ENCODE measurements at regions of chr19 and their contacts with region 1.

Region 1: DNA sequence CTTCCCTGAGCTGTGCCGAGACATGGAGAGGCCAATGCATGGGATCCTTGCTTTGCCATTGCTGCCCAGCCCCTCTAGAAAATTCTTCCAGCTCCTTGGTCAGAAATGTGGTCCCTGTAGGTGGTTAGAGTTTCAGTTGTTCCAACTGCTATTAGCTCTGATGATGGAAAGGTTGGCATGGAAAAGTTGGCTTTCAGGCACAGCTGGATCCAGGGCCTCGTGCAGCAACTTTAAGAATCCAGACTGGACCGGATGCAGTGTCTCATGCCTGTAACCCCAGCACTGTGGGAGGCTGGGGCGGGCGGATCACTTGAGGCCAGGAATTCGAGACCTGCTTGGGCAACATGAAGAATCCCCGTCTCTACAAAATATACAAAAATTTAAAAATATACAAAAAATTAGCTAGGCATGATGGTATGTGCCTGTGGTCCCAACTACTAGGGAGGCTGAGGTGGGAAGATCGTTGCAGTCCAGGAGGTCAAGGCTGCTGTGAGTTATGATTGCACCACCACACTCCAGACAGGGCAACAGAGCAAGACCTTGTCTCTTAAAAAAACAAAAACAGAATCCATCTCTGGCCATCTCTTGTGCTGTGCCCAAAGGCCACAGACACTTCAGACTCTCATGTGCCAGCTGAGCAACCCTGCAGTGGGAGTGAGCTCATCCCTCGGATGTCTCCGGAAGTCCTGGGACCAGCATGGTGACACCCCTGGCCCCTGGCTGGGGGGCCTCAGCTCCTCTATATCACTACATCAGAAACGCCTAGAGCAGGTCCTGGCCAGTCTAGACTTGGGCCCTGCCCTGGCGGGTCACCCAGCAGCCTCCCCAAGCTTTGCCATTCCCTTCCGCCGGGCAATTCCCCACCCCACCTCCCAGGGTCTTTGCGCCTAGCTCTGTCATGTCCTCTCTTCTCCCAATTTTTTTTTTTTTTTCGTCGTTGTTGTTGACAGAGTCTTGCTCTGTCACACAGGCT is 16.8 kb downstream of the MEX3D start:
- DNase-seq: no peak
- H3K4me3 ChIP-seq: no peak overlapping the region
- H3K4me3 Mint-ChIP-seq: no peak overlapping the region
- H3K27ac ChIP-seq: no peak overlapping the region
- H3K27ac Mint-ChIP-seq: peak overlapping the region in 1 of 7 donors; percentile 63
- H3K4me1 ChIP-seq: no peaks in the 10 kb centered on the region
- H3K4me1 Mint-ChIP-seq: peaks cover 0 to 2% (median 0%) of the 10 kb centered on the region in 4 donors
- H3K27me3 ChIP-seq: no peaks in the 10 kb centered on the region
- H3K27me3 Mint-ChIP-seq: peaks cover 3 to 15% of the 10 kb centered on the region in 2 donors

Region 2: DNA sequence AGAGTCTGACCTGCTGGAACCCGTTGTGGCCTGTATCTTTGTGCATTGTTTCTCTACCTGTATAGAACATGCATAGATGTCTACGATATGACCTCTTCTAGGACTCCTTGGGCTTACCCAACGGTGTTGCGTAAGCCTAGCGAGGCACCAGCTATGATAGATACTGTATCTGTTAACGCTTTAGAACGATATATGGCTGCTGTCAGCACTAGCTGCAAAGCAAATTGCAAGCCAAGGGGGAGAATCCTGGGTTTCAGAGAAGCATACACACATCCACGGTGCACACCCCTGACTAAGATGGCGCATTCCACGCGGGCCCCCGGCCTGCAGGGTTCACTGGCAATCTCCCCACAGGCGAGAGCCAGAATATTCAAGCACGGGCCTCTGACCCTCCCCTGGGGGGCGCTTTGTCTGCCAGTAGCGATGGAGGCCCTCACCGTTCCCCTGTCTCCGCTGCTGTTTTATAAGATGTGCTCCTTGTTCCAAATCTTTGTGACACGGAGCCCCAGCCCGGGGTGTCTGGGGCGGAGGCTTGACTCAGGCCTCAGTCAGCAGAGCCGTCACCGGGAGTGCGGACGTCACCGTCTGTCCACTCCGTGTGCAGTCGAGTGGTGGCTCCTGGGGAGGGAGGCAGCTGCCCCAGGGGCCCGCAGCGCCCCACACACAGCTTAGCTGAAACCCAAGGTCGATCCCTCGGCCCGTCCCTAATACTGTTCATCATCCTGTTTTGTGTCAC is 126.1 kb before region 1 on chr19:
- CTCF ChIA-PET with region 1: no interaction called
- POLR2A ChIA-PET with region 1: no interaction called
- intact Hi-C with region 1: no loop called
- DNase-seq: no peak
- H3K4me3 ChIP-seq: no peak overlapping the region
- H3K4me3 Mint-ChIP-seq: peak overlapping the region in 1 of 8 donors; percentile 41
- H3K27ac ChIP-seq: no peak overlapping the region
- H3K27ac Mint-ChIP-seq: peak overlapping the region in 1 of 7 donors; percentile 48
- H3K4me1 ChIP-seq: no peaks in the 10 kb centered on the region
- H3K4me1 Mint-ChIP-seq: peaks cover 0 to 13% (median 5%) of the 10 kb centered on the region in 4 donors
- H3K27me3 ChIP-seq: no peaks in the 10 kb centered on the region
- H3K27me3 Mint-ChIP-seq: no peaks in the 10 kb centered on the region

Region 3: GRCh38 chr19:1634242-1634937 is 83.0 kb after region 1 on chr19:
- CTCF ChIA-PET with region 1: no interaction called
- POLR2A ChIA-PET with region 1: no interaction called
- intact Hi-C with region 1: no loop called
- DNase-seq: no peak
- H3K4me3 ChIP-seq: no peak overlapping the region
- H3K4me3 Mint-ChIP-seq: no peak overlapping the region
- H3K27ac ChIP-seq: no peak overlapping the region
- H3K27ac Mint-ChIP-seq: no peak overlapping the region
- H3K4me1 ChIP-seq: no peaks in the 10 kb centered on the region
- H3K4me1 Mint-ChIP-seq: peaks cover 0 to 5% (median under 1%) of the 10 kb centered on the region in 4 donors
- H3K27me3 ChIP-seq: no peaks in the 10 kb centered on the region
- H3K27me3 Mint-ChIP-seq: no peaks in the 10 kb centered on the region

Region 4: DNA sequence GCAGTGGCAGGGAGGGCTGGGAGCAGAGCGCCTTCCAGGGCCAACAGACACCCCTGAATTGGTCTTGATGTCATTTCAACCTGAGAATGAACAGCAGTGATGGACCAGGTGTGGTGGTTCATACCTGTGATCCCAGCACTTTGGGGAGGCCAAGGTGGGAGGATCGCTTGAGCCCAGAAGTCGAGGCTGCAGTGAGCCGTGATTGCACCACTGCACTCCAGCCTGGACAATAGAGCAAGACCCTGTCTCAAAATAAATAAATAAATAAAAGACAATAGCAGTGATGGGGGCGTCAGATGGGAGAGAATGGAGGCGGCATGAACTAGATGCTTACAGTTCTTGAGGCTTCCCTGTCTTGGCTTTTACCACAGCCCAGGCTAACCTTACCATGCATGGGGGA is 155.9 kb after region 1 on chr19:
- CTCF ChIA-PET with region 1: no interaction called
- POLR2A ChIA-PET with region 1: no interaction called
- intact Hi-C with region 1: no loop called
- DNase-seq: no peak
- H3K4me3 ChIP-seq: no peak overlapping the region
- H3K4me3 Mint-ChIP-seq: no peak overlapping the region
- H3K27ac ChIP-seq: no peak overlapping the region
- H3K27ac Mint-ChIP-seq: no peak overlapping the region
- H3K4me1 ChIP-seq: no peaks in the 10 kb centered on the region
- H3K4me1 Mint-ChIP-seq: no peaks in the 10 kb centered on the region
- H3K27me3 ChIP-seq: no peaks in the 10 kb centered on the region
- H3K27me3 Mint-ChIP-seq: peaks cover 15 to 16% of the 10 kb centered on the region in 2 donors

Region 5: GRCh38 chr19:1767464-1767933 is 216.1 kb after region 1 on chr19:
- CTCF ChIA-PET with region 1: interaction called, 10 read pairs
- POLR2A ChIA-PET with region 1: no interaction called
- intact Hi-C with region 1: loop called (anchors 1 kb)
- DNase-seq: peak; percentile 40 to 61 (median 47)
- H3K4me3 ChIP-seq: no peak overlapping the region
- H3K4me3 Mint-ChIP-seq: no peak overlapping the region
- H3K27ac ChIP-seq: no peak overlapping the region
- H3K27ac Mint-ChIP-seq: no peak overlapping the region
- H3K4me1 ChIP-seq: peaks cover 4% of the 10 kb centered on the region
- H3K4me1 Mint-ChIP-seq: peaks cover 0 to 2% (median 0%) of the 10 kb centered on the region in 4 donors
- H3K27me3 ChIP-seq: peaks cover 54% of the 10 kb centered on the region
- H3K27me3 Mint-ChIP-seq: peaks cover 41 to 51% of the 10 kb centered on the region in 2 donors

Measured in CD4-positive, alpha-beta memory T cell (primary cell).